Posterior vena cava (tissue), 2 donors: ENCODE measurements at regions of chr9 and their contacts with region 1.

Region 1: GRCh38 chr9:127430415-127430814 is 6.2 kb downstream of the ZNF79 start:
- DNase-seq: no peak

Region 2: DNA sequence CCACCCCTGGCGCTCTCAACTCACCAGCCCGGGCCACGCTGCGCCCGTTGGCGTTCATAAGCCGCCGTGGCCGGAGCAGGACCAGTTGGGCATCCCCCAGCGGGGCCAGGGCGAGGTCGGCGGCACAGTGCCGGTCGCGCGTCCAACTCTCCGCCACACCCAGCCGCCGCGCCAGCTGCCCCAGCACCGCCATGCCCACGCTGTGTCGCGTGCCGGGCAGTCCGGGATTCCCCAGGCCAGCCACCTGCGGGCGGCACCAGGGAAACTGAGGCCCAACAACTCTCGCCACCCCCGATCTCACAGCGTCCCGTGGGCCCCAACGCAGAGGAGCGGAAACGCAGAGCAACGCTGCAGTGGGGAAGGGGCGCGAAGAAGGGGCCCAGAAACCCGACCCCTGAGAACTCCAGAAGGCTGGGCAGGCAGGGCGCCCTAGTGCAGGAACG is 284.6 kb after region 1 on chr9:
- intact Hi-C with region 1: loop called in 1 of 2 experiments (anchors 5 kb)
- DNase-seq: no peak